ENCODE measurements at regions of chr19 and their contacts with region 1.

Region 1: GRCh38 chr19:5107432-5108122 is 138.7 kb downstream of the KDM4B start:
- DNase-seq: peak in 1 of 2 donors; percentile 53
- ATAC-seq: peak; percentile 24 to 60 (median 36)
- H3K4me3 ChIP-seq: no peak overlapping the region
- H3K27ac ChIP-seq: peak overlapping the region in 7 of 10 donors; percentile 19 to 60 (median 22)
- H3K4me1 ChIP-seq: peaks cover 6 to 54% (median 43%) of the 10 kb centered on the region in 9 donors
- H3K27me3 ChIP-seq: no peaks in the 10 kb centered on the region
- CTCF ChIP-seq: no peak

Region 2: GRCh38 chr19:5063873-5064645 is 43.5 kb before region 1 on chr19:
- intact Hi-C with region 1: loop called in 1 of 10 experiments (anchors 5 kb)
- DNase-seq: no peak
- ATAC-seq: no peak
- H3K4me3 ChIP-seq: no peak overlapping the region
- H3K27ac ChIP-seq: no peak overlapping the region
- H3K4me1 ChIP-seq: peaks cover 0 to 10% (median 0%) of the 10 kb centered on the region in 9 donors
- H3K27me3 ChIP-seq: no peaks in the 10 kb centered on the region
- CTCF ChIP-seq: no peak

Measured in heart right ventricle (tissue), 16 donors.